ENCODE measurements at regions of chr15 and their contacts with region 1.

Region 1: GRCh38 chr15:34223904-34224596 is 766 bp upstream of the EMC4 start:
- DNase-seq: no peak
- H3K4me3 ChIP-seq: peak overlapping the region; percentile 97
- H3K4me3 Mint-ChIP-seq: peak overlapping the region; percentile 91 to 99 (median 95)
- H3K27ac ChIP-seq: peak overlapping the region; percentile 90
- H3K27ac Mint-ChIP-seq: peak overlapping the region; percentile 81 to 99 (median 98)
- H3K4me1 ChIP-seq: peaks cover 18% of the 10 kb centered on the region
- H3K4me1 Mint-ChIP-seq: peaks cover 25 to 39% (median 29%) of the 10 kb centered on the region in 3 donors
- H3K27me3 ChIP-seq: no peaks in the 10 kb centered on the region
- H3K27me3 Mint-ChIP-seq: peaks cover 4 to 9% of the 10 kb centered on the region in 2 donors

Region 2: DNA sequence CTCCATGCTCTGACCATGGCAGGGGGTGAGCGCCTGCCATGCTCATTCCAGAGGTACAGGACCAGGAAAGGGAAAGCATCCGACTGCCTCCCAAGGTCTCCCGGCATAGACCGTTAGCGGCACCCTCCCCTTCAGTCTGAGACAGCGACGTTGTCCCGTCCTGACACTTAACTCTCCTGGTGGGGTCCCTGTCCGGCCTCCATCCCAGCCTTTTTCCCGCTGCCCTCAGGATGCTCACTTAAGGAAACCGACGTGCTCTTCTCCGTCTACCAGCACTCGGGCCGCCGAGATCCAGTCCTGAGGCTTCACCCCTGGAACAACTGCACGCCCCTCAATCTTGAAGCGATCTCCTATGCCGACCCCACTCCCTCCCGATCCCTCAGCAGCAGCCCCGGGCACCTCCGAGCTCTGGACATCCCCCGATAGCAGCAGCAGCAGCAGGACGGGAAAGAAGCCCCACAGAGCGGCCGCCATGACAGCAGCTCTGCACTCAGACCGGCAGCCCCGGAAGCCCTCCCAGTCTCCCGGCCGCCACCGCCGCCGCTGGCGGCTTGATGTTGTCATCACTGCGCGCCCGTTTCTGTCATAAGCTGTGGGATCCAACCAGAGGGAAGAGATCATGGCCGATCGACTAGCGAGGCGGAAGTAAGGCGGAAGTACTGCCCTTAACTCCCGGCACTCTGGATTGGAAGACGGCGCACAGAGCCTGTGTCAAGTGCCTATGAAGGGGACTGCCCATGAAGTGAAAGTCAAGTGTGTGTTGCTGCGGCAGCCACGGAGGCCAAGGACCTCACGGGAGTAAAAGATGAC is 122.5 kb before region 1 on chr15 and contains the starts of genes EMC7 and PGBD4:
- CTCF ChIA-PET with region 1: interaction called, 4 read pairs
- POLR2A ChIA-PET with region 1: interaction called, 13 read pairs
- DNase-seq: peak; percentile 97 to 99 (median 99)
- H3K4me3 ChIP-seq: peak within 1 kb of the TSS; percentile 95
- H3K4me3 Mint-ChIP-seq: peak within 1 kb of the TSS; percentile 92 to 100 (median 99)
- H3K27ac ChIP-seq: peak within 1 kb of the TSS; percentile 98
- H3K27ac Mint-ChIP-seq: peak within 1 kb of the TSS; percentile 95 to 100 (median 99)
- H3K4me1 ChIP-seq: peaks cover 26% of the 10 kb centered on the region
- H3K4me1 Mint-ChIP-seq: peaks cover 37 to 52% (median 49%) of the 10 kb centered on the region in 3 donors
- H3K27me3 ChIP-seq: no peaks in the 10 kb centered on the region
- H3K27me3 Mint-ChIP-seq: peaks cover 0 to 2% of the 10 kb centered on the region in 2 donors
- total RNA-seq, gene EMC7: 75.0 to 78.9 TPM
- total RNA-seq, gene PGBD4: 2.8 to 3.2 TPM

Region 3: DNA sequence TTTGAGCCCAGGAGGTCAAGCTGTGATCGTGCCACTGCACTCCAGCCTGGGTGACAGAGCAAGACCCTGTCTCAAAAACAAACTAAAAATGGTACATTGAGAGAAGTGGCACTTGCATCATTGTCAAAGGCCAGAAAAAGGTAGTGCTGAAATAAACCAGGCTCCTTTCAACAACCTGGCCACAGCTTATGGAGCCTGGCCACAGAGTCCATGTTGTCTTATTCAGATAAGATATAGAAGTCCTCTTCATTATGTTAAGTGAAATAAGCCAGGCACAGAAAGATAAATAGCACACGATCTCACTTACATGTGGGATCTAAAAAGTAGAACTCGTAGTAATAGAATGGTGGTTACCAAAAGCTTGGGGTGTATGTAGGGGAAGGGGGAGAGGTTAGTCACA is 35.5 kb after region 1 on chr15:
- CTCF ChIA-PET with region 1: no interaction called
- POLR2A ChIA-PET with region 1: no interaction called
- DNase-seq: no peak
- H3K4me3 ChIP-seq: no peak overlapping the region
- H3K4me3 Mint-ChIP-seq: no peak overlapping the region
- H3K27ac ChIP-seq: no peak overlapping the region
- H3K27ac Mint-ChIP-seq: no peak overlapping the region
- H3K4me1 ChIP-seq: no peaks in the 10 kb centered on the region
- H3K4me1 Mint-ChIP-seq: peaks cover 0 to 3% (median 0%) of the 10 kb centered on the region in 3 donors
- H3K27me3 ChIP-seq: no peaks in the 10 kb centered on the region
- H3K27me3 Mint-ChIP-seq: peaks cover 0 to 3% of the 10 kb centered on the region in 2 donors

Region 4: GRCh38 chr15:34358367-34358766 is 134.3 kb after region 1 on chr15:
- CTCF ChIA-PET with region 1: no interaction called
- POLR2A ChIA-PET with region 1: no interaction called
- DNase-seq: no peak
- H3K4me3 ChIP-seq: no peak overlapping the region
- H3K4me3 Mint-ChIP-seq: no peak overlapping the region
- H3K27ac ChIP-seq: no peak overlapping the region
- H3K27ac Mint-ChIP-seq: peak overlapping the region in 2 of 8 donors; percentile 71 to 82
- H3K4me1 ChIP-seq: no peaks in the 10 kb centered on the region
- H3K4me1 Mint-ChIP-seq: peaks cover 0 to 5% (median 5%) of the 10 kb centered on the region in 3 donors
- H3K27me3 ChIP-seq: no peaks in the 10 kb centered on the region
- H3K27me3 Mint-ChIP-seq: no peaks in the 10 kb centered on the region

Measured in CD8-positive, alpha-beta memory T cell (primary cell).